ENCODE measurements at regions of chr16 and their contacts with region 1.

Region 1: GRCh38 chr16:87895641-87896141 is 26.4 kb upstream of the SLC7A5 start:
- DNase-seq: no peak
- ATAC-seq: no peak
- H3K4me3 ChIP-seq: no peak overlapping the region
- H3K27ac ChIP-seq: no peak overlapping the region
- H3K4me1 ChIP-seq: no peaks in the 10 kb centered on the region
- H3K27me3 ChIP-seq: no peaks in the 10 kb centered on the region
- CTCF ChIP-seq: no peak

Region 2: GRCh38 chr16:87765776-87766484 is 129.8 kb before region 1 on chr16 and contains the start of gene KLHDC4:
- CTCF ChIA-PET with region 1: no interaction called
- POLR2A ChIA-PET with region 1: no interaction called
- in situ Hi-C with region 1: no loop called
- intact Hi-C with region 1: no loop called
- DNase-seq: no peak
- ATAC-seq: peak; percentile 95
- H3K4me3 ChIP-seq: peak within 1 kb of the TSS; percentile 73 to 93
- H3K27ac ChIP-seq: peak within 1 kb of the TSS; percentile 89
- H3K4me1 ChIP-seq: peaks cover 3% of the 10 kb centered on the region; the same call in 1 of the 2 replicates
- H3K27me3 ChIP-seq: no peaks in the 10 kb centered on the region
- CTCF ChIP-seq: no peak
- total RNA-seq, gene KLHDC4: 50.7 TPM

Region 3: DNA sequence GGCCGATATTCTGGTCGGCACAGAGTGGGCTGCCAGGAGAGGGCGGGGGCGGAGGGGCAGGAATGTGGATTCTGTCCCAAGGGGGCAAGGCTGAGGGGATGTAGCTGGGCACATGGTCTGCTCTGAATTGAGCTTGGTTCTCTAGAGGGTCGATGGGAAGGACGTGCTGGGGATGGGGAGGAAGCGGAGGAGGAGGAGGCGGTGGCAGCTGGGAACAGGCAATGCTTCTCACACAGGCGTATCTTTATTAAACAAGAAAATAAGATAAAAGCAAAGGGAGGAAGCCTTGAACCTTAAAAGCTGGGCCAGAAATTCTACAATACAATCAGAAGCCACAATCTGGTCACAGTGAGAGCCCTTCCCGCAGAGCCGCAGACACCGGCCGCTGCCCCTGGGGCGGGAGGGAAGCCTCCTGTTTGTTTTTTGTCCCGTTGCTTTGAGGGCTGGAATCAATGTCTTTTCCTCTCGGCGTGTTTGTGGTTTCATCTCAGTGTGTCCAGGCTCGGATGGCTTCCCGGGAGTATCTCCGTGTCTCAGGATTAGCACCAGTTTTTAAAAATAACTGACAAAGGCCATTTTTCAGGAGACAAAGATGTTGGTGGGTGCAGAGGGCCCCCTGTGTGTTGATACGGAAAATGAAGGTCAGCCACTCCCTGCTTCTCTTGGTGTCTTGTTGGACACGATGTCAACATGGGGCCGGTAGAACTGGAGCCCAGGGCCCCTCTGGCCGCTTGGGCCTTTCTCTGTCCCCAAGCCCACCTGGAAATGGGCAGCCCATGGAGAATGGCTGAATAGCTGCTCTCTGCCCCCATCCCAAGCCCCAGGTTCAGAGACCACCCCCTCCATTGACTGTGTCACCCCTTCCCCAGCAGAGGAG is 14.1 kb before region 1 on chr16:
- CTCF ChIA-PET with region 1: interaction called, 14 read pairs
- POLR2A ChIA-PET with region 1: no interaction called
- in situ Hi-C with region 1: no loop called
- intact Hi-C with region 1: no loop called
- DNase-seq: no peak
- ATAC-seq: no peak
- H3K4me3 ChIP-seq: no peak overlapping the region
- H3K27ac ChIP-seq: no peak overlapping the region
- H3K4me1 ChIP-seq: no peaks in the 10 kb centered on the region
- H3K27me3 ChIP-seq: no peaks in the 10 kb centered on the region
- CTCF ChIP-seq: no peak

Measured in Panc1 (cell line).